MCF 10A (cell line): ENCODE measurements at regions of chr2 and their contacts with region 1.

Region 1: DNA sequence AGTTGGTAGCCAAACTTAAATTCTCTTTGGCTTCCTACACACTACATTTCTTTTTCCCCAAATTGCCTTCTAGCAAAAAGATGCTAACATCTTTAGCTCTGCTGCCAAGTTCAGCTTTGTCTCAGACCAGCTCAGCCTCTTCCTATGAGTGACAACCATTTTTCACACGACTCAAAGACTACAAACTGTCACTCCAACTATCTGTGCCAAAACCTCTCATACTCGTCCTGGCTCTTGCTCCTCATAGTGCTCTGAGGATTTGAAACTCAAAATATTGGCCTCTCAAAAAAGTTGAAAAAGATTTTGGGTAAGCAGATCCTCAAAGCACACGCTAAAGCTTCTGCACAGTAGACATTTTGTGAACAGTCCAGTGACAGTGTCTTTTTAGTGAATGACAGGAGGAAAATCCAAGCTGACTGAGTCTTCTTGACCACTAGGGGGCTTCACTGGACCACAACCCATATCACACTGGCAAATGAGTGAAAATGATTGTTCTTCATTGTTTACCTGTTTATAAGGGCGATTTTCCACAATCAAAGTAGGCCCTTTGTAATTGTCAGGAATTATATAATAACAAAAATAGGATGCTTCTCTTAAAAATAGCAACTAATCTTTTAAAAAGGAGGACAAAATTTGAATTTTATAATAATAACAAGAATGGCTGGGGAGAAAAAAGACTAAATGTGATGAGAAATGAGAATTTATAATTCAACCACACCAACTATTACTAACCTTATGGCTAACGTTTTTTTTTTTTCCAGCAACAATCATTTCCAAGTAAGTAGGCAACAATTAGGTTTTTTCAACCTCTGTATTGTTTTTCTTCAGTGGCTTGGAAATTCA is 85.5 kb upstream of the PGAP1 start:
- DNase-seq: peak; percentile 62
- H3K4me3 Mint-ChIP-seq: no peak overlapping the region
- H3K27ac Mint-ChIP-seq: no peak overlapping the region
- H3K4me1 Mint-ChIP-seq: peaks cover 13% of the 10 kb centered on the region
- H3K27me3 Mint-ChIP-seq: no peaks in the 10 kb centered on the region
- CTCF ChIP-seq: peak; percentile 60

Region 2: DNA sequence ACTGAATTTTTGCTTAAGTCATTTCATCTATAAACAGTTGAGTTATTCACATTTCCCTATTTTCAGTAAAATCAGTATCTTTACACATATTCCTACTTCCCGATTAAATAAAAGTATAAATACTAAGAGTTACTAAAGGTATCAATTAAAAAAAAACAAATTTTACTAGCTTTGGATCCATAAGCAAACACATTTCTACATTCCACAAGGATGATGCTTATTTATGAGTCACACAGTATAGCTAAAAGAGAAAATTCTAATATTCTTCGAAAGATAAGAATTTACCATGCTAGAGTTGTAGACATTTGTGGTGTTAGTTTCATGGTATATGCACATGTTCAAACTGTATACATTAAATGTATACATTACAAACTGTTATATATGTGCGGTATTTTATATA is 109.2 kb before region 1 on chr2:
- CTCF ChIA-PET with region 1: no interaction called
- POLR2A ChIA-PET with region 1: no interaction called
- intact Hi-C with region 1: no loop called
- DNase-seq: no peak
- H3K4me3 Mint-ChIP-seq: no peak overlapping the region
- H3K27ac Mint-ChIP-seq: no peak overlapping the region
- H3K4me1 Mint-ChIP-seq: peaks cover 5% of the 10 kb centered on the region
- H3K27me3 Mint-ChIP-seq: no peaks in the 10 kb centered on the region
- CTCF ChIP-seq: no peak

Region 3: DNA sequence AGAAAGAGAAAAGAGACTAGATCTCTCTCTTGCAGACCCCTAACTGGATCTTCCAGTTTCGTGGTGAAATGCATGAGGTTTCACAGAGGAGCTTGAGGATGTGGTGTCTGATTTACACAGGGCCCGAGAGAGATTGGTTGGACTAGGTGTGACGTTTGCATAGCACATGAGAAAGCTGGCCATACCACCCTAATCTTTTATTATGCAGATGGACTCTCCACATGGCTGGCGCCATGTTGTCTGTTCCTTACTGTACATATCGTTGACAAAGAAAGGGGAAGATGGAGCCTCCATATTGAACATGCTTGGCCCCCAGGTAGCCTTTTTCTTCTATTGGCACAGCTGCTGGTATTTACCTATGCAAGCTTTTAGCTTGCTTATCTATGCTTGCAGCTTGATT is 58.0 kb before region 1 on chr2:
- CTCF ChIA-PET with region 1: no interaction called
- POLR2A ChIA-PET with region 1: no interaction called
- intact Hi-C with region 1: no loop called
- DNase-seq: no peak
- H3K4me3 Mint-ChIP-seq: no peak overlapping the region
- H3K27ac Mint-ChIP-seq: no peak overlapping the region
- H3K4me1 Mint-ChIP-seq: peaks cover 6% of the 10 kb centered on the region
- H3K27me3 Mint-ChIP-seq: no peaks in the 10 kb centered on the region
- CTCF ChIP-seq: no peak

Region 4: DNA sequence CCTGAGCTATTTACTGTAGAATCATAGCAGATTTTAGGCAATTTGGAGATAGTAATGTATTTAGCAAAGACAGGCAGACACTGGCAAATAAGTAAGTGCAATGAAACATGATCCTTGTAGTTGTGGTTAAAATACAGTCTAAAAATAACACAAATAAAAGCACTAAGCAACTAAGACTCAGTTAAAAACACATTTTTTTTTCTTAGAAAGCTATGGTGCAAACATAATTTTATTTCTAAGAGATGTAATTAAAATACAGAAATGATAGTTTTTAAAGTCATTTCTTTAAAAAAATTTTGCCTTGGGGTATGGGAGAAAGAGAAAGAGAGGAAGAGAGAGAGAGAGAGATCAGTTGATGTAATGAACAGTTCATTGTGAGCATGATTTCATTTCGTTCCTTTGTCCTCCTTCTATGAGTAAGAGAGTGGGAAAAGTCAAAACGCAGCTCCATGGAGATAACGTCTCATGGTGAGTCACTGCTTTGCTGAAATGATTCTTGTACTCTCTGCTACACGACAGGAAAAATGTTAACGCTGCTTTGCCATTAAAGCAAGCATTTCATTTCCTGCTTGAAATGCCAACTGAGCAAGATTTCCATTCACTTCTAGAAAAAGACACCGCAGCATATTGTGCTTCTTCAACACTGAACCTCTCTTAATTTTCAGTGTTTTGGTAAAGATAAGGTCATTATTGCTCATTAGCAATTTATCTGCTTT is 24.2 kb before region 1 on chr2:
- CTCF ChIA-PET with region 1: interaction called, 15 read pairs
- POLR2A ChIA-PET with region 1: interaction called, 3 read pairs
- intact Hi-C with region 1: no loop called
- DNase-seq: peak; percentile 94
- H3K4me3 Mint-ChIP-seq: peak overlapping the region; percentile 65
- H3K27ac Mint-ChIP-seq: peak overlapping the region; percentile 98
- H3K4me1 Mint-ChIP-seq: peaks cover 18% of the 10 kb centered on the region
- H3K27me3 Mint-ChIP-seq: no peaks in the 10 kb centered on the region
- CTCF ChIP-seq: no peak

Region 5: DNA sequence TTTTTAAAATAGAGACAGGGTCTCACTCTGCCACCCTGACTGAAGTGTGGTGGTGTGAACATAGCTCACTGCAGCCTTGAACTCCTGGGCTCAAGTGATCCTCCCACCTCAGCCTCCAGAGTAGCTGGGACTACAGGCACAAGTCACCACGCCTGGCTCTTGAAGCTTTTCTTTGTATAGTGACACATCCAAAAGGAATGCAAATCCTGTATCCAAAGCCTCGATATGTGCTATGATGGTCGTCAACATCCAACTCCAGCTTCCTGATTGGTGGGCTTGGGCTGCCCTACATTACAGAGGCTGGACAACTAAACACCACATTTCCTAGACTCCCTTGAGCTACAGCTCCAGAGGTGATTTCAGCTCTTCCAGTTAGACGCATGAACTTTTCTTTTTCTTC is 16.2 kb after region 1 on chr2:
- CTCF ChIA-PET with region 1: interaction called, 13 read pairs
- POLR2A ChIA-PET with region 1: no interaction called
- intact Hi-C with region 1: no loop called
- DNase-seq: peak; percentile 34
- H3K4me3 Mint-ChIP-seq: no peak overlapping the region
- H3K27ac Mint-ChIP-seq: no peak overlapping the region
- H3K4me1 Mint-ChIP-seq: no peaks in the 10 kb centered on the region
- H3K27me3 Mint-ChIP-seq: no peaks in the 10 kb centered on the region
- CTCF ChIP-seq: no peak

Region 6: GRCh38 chr2:197229509-197230443 is 217.8 kb after region 1 on chr2:
- CTCF ChIA-PET with region 1: no interaction called
- POLR2A ChIA-PET with region 1: no interaction called
- intact Hi-C with region 1: no loop called
- DNase-seq: no peak
- H3K4me3 Mint-ChIP-seq: no peak overlapping the region
- H3K27ac Mint-ChIP-seq: no peak overlapping the region
- H3K4me1 Mint-ChIP-seq: peaks cover 9% of the 10 kb centered on the region
- H3K27me3 Mint-ChIP-seq: no peaks in the 10 kb centered on the region
- CTCF ChIP-seq: no peak